ENCODE measurements at regions of chr19 and their contacts with region 1.

Region 1: GRCh38 chr19:14347999-14348889 is 33.0 kb upstream of the ADGRE5 start:
- DNase-seq: peak; percentile 71
- ATAC-seq: peak; percentile 77
- H3K4me3 Mint-ChIP-seq: peak overlapping the region; percentile 61
- H3K27ac Mint-ChIP-seq: peak overlapping the region; percentile 54
- H3K4me1 Mint-ChIP-seq: peaks cover 20% of the 10 kb centered on the region
- H3K27me3 Mint-ChIP-seq: no peaks in the 10 kb centered on the region

Region 2: GRCh38 chr19:14147797-14148605 is 200.2 kb before region 1 on chr19:
- CTCF ChIA-PET with region 1: interaction called, 20 read pairs
- DNase-seq: peak; percentile 68
- ATAC-seq: peak; percentile 63
- H3K4me3 Mint-ChIP-seq: no peak overlapping the region
- H3K27ac Mint-ChIP-seq: peak overlapping the region; percentile 71
- H3K4me1 Mint-ChIP-seq: peaks cover 19% of the 10 kb centered on the region
- H3K27me3 Mint-ChIP-seq: no peaks in the 10 kb centered on the region

Region 3: GRCh38 chr19:14218620-14219330 is 129.5 kb before region 1 on chr19:
- CTCF ChIA-PET with region 1: interaction called, 11 read pairs
- DNase-seq: no peak
- ATAC-seq: no peak
- H3K4me3 Mint-ChIP-seq: no peak overlapping the region
- H3K27ac Mint-ChIP-seq: no peak overlapping the region
- H3K4me1 Mint-ChIP-seq: peaks cover 20% of the 10 kb centered on the region
- H3K27me3 Mint-ChIP-seq: peaks cover 4% of the 10 kb centered on the region

Region 4: GRCh38 chr19:14366498-14366915 is 18.3 kb after region 1 on chr19:
- CTCF ChIA-PET with region 1: interaction called, 33 read pairs
- DNase-seq: peak; percentile 93
- ATAC-seq: peak; percentile 37
- H3K4me3 Mint-ChIP-seq: peak overlapping the region; percentile 12
- H3K27ac Mint-ChIP-seq: peak overlapping the region; percentile 89
- H3K4me1 Mint-ChIP-seq: peaks cover 74% of the 10 kb centered on the region
- H3K27me3 Mint-ChIP-seq: no peaks in the 10 kb centered on the region

Region 5: DNA sequence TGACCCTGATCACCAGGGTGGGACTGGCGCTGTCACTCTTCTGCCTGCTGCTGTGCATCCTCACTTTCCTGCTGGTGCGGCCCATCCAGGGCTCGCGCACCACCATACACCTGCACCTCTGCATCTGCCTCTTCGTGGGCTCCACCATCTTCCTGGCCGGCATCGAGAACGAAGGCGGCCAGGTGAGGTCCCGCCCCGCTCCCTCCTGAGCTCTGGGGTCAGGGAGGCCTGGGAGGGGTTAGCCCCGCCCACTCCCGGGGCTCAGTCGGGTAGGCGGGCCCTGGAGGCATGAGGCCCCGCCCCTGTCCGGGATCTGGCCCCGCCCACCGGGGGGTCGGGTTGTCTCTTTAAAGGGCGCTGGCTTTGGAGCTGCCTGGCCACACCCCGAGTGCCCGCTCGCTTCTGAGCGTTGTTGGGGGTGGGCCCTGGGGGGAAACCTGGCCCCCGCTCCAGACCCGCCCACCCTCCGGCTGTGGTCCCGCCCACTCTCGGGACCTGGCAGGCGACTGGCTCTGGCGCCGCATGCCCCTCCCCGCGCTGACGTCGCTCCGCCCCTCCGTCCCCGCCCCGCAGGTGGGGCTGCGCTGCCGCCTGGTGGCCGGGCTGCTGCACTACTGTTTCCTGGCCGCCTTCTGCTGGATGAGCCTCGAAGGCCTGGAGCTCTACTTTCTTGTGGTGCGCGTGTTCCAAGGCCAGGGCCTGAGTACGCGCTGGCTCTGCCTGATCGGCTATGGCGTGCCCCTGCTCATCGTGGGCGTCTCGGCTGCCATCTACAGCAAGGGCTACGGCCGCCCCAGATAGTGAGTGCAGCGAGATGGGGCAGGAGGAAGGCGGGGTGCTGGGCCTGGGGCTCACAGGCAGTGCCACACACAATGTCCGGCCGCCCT is 57.8 kb after region 1 on chr19:
- CTCF ChIA-PET with region 1: interaction called, 13 read pairs
- DNase-seq: peak; percentile 94
- ATAC-seq: peak; percentile 80
- H3K4me3 Mint-ChIP-seq: no peak overlapping the region
- H3K27ac Mint-ChIP-seq: peak overlapping the region; percentile 52
- H3K4me1 Mint-ChIP-seq: peaks cover 38% of the 10 kb centered on the region
- H3K27me3 Mint-ChIP-seq: no peaks in the 10 kb centered on the region